Activated CD4-positive, alpha-beta memory T cell treated with anti-CD3 and anti-CD28 coated beads for 36 hours (primary cell): ENCODE measurements at regions of chr12 and their contacts with region 1.

Region 1: DNA sequence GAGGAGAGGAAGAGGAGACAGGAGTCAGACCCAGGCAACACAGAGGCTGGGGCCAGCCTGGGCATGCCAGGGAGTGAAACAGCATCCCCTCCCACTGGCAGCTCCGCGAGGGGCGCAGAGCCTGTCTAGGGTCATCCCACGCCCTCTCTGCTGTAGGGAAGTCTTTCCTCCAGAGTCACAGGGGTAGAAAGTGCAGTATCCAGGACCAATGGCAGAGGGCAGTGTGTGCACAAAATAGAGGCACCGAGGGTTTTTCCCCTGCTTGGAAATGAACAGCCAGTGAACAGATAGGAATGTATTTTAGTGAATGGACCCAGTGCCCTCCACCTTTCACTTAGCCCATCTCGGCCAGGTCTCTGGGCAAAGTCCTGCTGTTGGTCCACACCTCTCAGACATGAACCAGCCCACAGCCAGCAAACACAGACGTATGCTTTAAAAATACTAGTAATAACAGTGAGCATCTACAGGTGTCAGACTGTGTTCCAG is 9.4 kb upstream of the KRT74 start:
- DNase-seq: peak; percentile 74
- H3K4me3 Mint-ChIP-seq: no peak overlapping the region
- H3K27ac Mint-ChIP-seq: no peak overlapping the region
- H3K4me1 Mint-ChIP-seq: peaks cover 22% of the 10 kb centered on the region
- H3K27me3 Mint-ChIP-seq: no peaks in the 10 kb centered on the region

Region 2: GRCh38 chr12:52645120-52645761 is 62.2 kb after region 1 on chr12:
- CTCF ChIA-PET with region 1: no interaction called
- POLR2A ChIA-PET with region 1: no interaction called
- intact Hi-C with region 1: loop called (anchors 10 kb)
- DNase-seq: peak; percentile 40
- H3K4me3 Mint-ChIP-seq: no peak overlapping the region
- H3K27ac Mint-ChIP-seq: peak overlapping the region; percentile 36
- H3K4me1 Mint-ChIP-seq: peaks cover 56% of the 10 kb centered on the region
- H3K27me3 Mint-ChIP-seq: no peaks in the 10 kb centered on the region

Region 3: DNA sequence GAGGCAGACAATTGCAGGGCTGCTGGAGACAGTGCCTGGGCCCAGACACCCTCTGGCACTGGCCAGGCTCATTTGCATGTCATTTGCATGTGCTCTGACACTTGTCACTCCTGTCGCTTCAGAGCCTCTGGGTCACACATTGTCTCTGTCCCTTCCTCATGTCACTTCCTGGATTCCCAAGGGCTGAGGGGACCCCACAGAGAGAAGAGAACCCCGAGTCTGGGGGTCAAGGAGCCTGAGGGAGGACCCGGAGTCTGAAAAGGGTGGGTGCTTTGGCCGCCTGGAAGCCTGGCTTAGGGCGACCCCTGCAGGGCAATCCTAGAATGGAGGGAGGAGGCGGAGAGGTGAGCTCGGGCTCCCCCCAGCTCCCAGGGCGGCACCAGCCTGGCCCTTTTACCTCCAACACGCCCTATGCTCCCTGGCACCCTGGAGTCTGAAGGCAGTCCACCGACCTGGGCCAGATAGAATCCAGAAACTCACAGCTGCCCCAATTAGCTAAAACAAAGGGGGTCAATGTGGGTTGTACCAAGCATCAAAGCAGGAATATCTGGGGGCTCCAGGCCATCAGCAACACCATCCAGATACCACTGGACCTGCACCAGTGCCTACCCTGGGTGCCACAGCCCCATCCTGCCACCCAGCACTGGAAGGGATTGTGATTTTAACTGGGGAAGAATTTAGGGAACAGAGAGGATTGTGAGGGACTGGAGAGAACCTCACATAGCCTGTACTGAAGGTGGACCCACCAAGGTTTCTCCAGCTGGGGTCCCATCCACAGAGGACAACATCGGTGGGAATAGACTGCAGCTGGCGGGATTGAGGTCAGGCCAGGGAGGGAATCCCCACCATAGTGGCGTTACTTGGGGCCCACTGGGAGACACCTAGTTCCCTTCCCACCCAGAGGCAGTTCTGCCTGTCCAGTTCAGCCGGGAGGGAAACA is 287.6 kb after region 1 on chr12:
- CTCF ChIA-PET with region 1: interaction called, 127 read pairs
- POLR2A ChIA-PET with region 1: no interaction called
- intact Hi-C with region 1: loop called (anchors 1 kb)
- DNase-seq: peak; percentile 83
- H3K4me3 Mint-ChIP-seq: no peak overlapping the region
- H3K27ac Mint-ChIP-seq: no peak overlapping the region
- H3K4me1 Mint-ChIP-seq: peaks cover 26% of the 10 kb centered on the region
- H3K27me3 Mint-ChIP-seq: peaks cover 3% of the 10 kb centered on the region